ENCODE measurements at regions of chr9 and their contacts with region 1.

Region 1: DNA sequence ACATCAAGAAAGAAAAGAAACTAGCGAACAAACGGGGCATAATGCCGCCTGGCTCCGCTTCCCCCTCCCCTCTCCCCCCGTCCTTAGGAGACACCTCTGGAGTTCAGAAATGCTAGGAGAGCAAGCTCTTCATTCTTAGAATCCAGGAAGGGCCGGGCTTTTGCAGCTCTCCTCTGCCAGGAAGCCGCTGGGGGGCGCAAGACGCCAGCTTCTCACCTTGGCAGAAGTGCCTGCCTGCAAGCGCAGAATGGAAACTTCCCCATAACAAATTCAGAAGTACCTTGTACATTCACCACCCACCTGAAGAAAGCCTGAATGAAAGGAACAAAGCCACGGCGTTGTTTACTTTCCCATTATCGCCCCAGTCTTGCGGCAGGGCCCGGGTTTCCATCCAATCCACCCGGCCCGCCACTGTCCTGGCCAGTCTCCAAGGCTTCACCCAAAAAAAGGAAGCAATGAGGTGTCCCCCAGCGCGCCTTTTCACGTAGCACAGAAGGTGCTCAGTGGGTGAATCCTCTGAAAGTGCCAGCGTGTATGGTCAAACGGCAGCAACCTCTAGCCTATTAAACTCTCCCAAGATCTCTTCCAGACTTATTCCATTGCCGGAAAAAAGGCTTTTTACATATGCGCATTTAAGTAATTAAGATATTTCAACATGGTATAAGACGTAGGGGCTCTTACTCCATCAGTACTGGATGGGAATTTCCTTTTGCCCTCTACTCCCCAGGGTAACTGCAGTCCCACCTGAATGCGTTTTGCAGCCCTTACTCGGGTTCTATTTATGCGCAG is 1.6 kb upstream of the GADD45G start:
- DNase-seq: peak; percentile 88 to 91
- ATAC-seq: peak; percentile 19 to 65 (median 43)
- H3K4me3 ChIP-seq: peak overlapping the region in 9 of 10 donors; percentile 75 to 90 (median 85)
- H3K27ac ChIP-seq: peak overlapping the region in 8 of 10 donors; percentile 50 to 97 (median 92)
- H3K4me1 ChIP-seq: peaks cover 3 to 48% (median 43%) of the 10 kb centered on the region in 9 donors
- H3K27me3 ChIP-seq: peaks cover 0 to 13% (median 0%) of the 10 kb centered on the region in 7 donors
- CTCF ChIP-seq: peak; percentile 74 to 91 (median 86)

Region 2: DNA sequence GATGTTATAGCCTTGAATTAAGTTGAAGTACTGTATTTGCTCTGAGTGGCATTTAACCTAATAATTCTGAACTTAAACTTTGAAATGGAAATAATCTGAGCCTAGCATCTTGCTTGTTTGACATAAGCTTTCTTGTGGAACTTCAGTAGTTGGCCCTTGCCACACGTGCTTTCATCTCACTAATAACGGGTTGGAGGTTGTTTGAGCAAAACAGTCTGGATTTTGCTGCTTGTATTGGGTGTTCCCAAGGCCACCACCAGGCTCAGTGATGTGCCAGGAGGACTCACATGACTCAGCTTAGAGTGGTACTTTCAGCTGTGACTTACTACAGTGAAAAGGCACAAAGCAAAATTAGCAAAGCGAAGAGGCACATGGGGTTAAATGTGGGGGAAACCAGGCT is 249.2 kb before region 1 on chr9:
- intact Hi-C with region 1: no loop called
- DNase-seq: no peak
- ATAC-seq: peak in 2 of 8 donors; percentile 45 to 49
- H3K4me3 ChIP-seq: no peak overlapping the region
- H3K27ac ChIP-seq: no peak overlapping the region
- H3K4me1 ChIP-seq: peaks cover 0 to 38% (median 27%) of the 10 kb centered on the region in 9 donors
- H3K27me3 ChIP-seq: no peaks in the 10 kb centered on the region
- CTCF ChIP-seq: no peak

Region 3: DNA sequence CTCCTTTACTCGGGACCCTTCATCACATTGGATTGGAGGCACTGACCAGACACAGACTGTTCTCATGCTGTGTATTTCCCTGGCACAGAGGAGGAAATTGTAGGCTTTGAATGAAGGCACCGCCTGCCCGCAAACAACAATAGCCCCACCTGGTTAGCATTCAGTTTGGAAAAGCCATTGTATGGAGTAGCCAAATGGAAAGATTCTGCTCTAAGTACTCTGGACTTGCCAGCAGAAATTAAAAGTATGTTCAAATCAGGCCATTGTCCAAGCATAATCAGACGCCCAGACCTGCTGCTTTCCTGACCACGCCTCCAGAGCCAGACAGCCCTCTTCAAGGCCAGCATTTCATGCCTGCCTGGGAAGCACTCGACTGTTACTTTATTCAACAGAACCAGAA is 97.3 kb before region 1 on chr9:
- intact Hi-C with region 1: no loop called
- DNase-seq: no peak
- ATAC-seq: peak in 7 of 8 donors; percentile 34 to 83 (median 70)
- H3K4me3 ChIP-seq: no peak overlapping the region
- H3K27ac ChIP-seq: peak overlapping the region in 1 of 10 donors; percentile 9
- H3K4me1 ChIP-seq: peaks cover 0 to 40% (median 9%) of the 10 kb centered on the region in 9 donors
- H3K27me3 ChIP-seq: no peaks in the 10 kb centered on the region
- CTCF ChIP-seq: no peak

Region 4: DNA sequence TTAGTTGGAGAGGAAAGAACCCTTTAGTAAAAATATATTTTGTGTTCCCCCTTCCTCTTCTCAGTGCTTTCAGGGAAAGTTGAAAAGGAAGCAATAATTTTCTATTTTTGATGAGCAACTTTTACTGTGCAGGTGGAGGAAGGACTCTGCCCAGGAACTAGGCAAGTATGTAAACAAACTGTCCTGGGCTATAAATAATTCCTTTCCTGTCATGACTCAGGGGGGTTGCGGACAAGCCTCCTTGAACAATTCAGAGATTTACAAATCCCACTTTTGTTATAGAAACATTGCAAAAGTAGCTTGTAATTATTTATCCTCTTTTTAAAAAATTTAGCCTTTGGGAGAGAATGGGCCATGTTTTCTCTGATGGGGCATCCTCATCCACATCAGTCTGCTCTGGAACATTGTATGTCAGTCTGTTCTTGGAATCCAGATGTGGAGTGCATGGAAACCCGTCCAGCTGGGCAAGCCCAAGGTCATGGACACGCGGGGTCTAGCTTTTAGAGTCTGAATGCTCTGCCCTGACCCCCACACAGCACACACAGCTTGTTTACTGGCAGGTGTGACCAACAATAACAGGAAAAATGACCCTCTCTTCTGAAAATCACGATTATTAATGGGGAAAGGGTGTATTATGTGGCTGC is 129.2 kb after region 1 on chr9:
- intact Hi-C with region 1: loop called in 6 of 10 experiments (anchors 10 kb)
- DNase-seq: no peak
- ATAC-seq: peak in 6 of 8 donors; percentile 52 to 85 (median 70)
- H3K4me3 ChIP-seq: no peak overlapping the region
- H3K27ac ChIP-seq: peak overlapping the region in 7 of 10 donors; percentile 10 to 58 (median 40)
- H3K4me1 ChIP-seq: peaks cover 9 to 33% (median 23%) of the 10 kb centered on the region in 9 donors
- H3K27me3 ChIP-seq: no peaks in the 10 kb centered on the region
- CTCF ChIP-seq: no peak

Region 5: GRCh38 chr9:89802781-89803355 is 199.7 kb after region 1 on chr9:
- intact Hi-C with region 1: loop called in 1 of 10 experiments (anchors 5 kb)
- DNase-seq: peak; percentile 75
- ATAC-seq: peak; percentile 75 to 94 (median 90)
- H3K4me3 ChIP-seq: no peak overlapping the region
- H3K27ac ChIP-seq: peak overlapping the region in 1 of 10 donors; percentile 22
- H3K4me1 ChIP-seq: peaks cover 3 to 40% (median 22%) of the 10 kb centered on the region in 9 donors
- H3K27me3 ChIP-seq: no peaks in the 10 kb centered on the region
- CTCF ChIP-seq: no peak

Region 6: DNA sequence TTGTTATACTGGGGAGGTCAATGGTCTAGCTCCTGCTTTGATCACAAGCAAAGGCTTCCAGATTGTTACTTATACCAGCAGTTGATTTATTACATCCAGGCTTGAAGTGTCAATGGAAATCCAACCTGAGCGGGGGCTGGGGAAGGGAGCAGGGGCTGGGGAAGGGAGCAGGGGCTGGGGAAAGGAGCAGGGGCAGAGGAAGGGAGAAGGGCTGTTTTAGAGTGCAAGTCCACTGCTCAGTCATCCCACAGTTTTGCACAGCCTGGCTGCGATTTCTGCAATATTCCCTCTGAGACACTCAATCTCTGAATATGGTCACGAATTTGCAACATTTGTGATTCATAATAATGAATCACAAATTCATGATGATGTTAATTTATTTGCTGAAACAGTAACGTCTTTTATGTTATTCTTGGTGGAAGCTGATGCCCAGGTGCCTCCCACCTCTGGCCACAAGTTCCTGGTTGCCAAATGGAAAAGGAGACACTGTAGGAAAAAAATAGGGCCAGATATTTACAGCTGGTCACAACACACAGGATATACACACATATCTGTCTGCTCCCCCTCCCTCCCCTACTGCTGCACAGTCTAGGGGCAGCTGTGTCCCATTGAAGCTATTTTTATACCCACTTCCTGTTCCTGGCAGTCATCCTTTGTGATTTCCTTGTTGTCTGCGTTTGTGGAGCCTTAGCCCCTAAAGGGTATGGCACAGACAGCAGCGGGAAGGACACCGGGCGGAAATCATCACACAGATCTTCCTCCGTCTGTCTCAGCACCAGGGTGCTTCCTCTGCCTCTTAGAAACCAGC is 326.7 kb after region 1 on chr9:
- intact Hi-C with region 1: loop called in 1 of 10 experiments (anchors 10 kb)
- DNase-seq: peak in 1 of 2 donors; percentile 30
- ATAC-seq: peak; percentile 63 to 90 (median 80)
- H3K4me3 ChIP-seq: no peak overlapping the region
- H3K27ac ChIP-seq: peak overlapping the region in 3 of 10 donors; percentile 15 to 25 (median 18)
- H3K4me1 ChIP-seq: peaks cover 3 to 31% (median 23%) of the 10 kb centered on the region in 9 donors
- H3K27me3 ChIP-seq: no peaks in the 10 kb centered on the region
- CTCF ChIP-seq: no peak

Region 7: GRCh38 chr9:90102292-90102901 is 499.2 kb after region 1 on chr9:
- intact Hi-C with region 1: loop called (anchors 1 to 5 kb)
- DNase-seq: peak; percentile 68 to 82
- ATAC-seq: peak; percentile 74 to 88 (median 84)
- H3K4me3 ChIP-seq: no peak overlapping the region
- H3K27ac ChIP-seq: no peak overlapping the region
- H3K4me1 ChIP-seq: peaks cover 2 to 32% (median 15%) of the 10 kb centered on the region in 9 donors
- H3K27me3 ChIP-seq: no peaks in the 10 kb centered on the region
- CTCF ChIP-seq: peak; percentile 43 to 89 (median 77)